Adrenal gland (tissue), 19 donors: ENCODE measurements at regions of chr3 and their contacts with region 1.

Region 1: GRCh38 chr3:106711650-106712049 is 665.6 kb upstream of the CCDC54 start:
- DNase-seq: no peak
- H3K4me3 ChIP-seq: no peak overlapping the region
- H3K27ac ChIP-seq: no peak overlapping the region
- H3K4me1 ChIP-seq: no peaks in the 10 kb centered on the region
- H3K27me3 ChIP-seq: no peaks in the 10 kb centered on the region
- CTCF ChIP-seq: no peak
- POLR2A ChIP-seq: no peak

Region 2: DNA sequence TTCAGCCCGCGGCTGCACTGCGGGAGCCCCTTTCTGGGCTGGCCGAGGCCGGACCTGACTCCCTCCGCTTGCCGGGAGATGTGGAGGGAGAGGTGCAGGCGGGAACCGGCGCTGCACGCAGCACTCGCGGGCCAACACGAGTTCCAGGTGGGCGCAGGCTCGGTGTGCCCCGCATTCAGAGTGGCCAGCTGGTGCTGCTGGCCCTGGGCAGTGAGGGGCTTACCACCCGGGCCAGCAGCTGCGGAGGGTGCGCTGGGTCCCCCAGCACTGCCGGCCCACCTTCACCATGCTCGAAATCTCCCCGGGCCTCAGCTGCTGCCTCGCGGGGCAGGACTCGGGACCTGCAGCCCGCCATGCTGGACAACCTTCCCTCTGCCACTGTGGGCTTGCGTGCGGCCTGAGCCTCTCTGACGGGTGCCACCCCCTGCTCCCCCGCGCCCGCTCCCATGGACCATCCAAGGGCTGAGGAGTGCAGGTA is 67.9 kb before region 1 on chr3:
- intact Hi-C with region 1: no loop called
- DNase-seq: no peak
- H3K4me3 ChIP-seq: no peak overlapping the region
- H3K27ac ChIP-seq: no peak overlapping the region
- H3K4me1 ChIP-seq: no peaks in the 10 kb centered on the region
- H3K27me3 ChIP-seq: no peaks in the 10 kb centered on the region
- CTCF ChIP-seq: no peak
- POLR2A ChIP-seq: no peak

Region 3: GRCh38 chr3:106750092-106750491 is 38.4 kb after region 1 on chr3:
- intact Hi-C with region 1: loop called in 1 of 2 experiments (anchors 5 kb)
- DNase-seq: no peak
- H3K4me3 ChIP-seq: no peak overlapping the region
- H3K27ac ChIP-seq: no peak overlapping the region
- H3K4me1 ChIP-seq: no peaks in the 10 kb centered on the region
- H3K27me3 ChIP-seq: no peaks in the 10 kb centered on the region
- CTCF ChIP-seq: no peak
- POLR2A ChIP-seq: no peak

Region 4: GRCh38 chr3:106877627-106878026 is 166.0 kb after region 1 on chr3:
- intact Hi-C with region 1: no loop called
- DNase-seq: no peak
- H3K4me3 ChIP-seq: no peak overlapping the region
- H3K27ac ChIP-seq: no peak overlapping the region
- H3K4me1 ChIP-seq: no peaks in the 10 kb centered on the region
- H3K27me3 ChIP-seq: no peaks in the 10 kb centered on the region
- CTCF ChIP-seq: no peak
- POLR2A ChIP-seq: no peak